ENCODE measurements at regions of chr7 and their contacts with region 1.

Region 1: DNA sequence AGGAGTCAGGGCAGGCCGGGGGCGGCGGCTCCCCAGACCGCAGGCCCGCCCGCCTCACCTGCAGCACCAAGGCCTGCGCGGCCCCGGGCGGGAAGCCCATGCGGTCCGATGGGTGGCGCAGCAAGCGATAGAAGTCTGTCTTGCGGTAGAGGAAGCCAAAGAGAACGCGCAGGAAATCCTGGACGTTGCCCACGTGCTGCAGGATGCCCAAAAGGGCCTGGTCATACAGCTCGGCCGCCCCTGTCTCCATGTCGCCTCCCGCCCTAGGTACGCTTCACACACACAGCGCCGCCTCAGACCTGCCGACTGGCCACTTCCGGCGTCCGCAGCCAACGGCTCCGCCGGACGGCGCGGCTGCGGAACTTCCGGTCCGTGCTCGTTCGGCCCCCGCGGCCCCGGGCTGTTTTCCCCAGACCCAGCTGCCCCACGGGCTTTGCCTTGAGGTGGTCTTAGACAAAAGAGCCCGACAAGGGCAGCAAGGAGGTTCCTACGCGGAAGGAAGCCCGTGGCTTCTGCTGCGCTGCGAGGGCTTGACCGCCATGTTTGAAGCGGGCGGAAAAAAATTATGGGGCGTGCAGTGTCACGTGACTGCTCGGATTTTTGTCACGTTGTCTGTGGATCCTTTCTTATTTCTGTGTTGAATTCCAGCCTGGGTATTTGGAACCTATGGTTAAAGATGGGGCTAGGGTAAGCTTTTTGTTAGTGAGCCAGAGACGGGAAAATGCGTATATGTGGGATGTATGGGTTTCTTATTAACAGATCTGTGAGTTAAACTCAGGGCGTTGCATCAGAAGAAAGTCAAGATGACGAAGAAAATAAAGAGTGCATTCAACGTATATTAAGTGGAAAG is at the start of gene NUDCD3:
- DNase-seq: peak; percentile 97
- H3K4me3 ChIP-seq: peak within 1 kb of the TSS; percentile 96 to 98
- H3K27ac ChIP-seq: peak within 1 kb of the TSS; percentile 98 to 99
- H3K4me1 ChIP-seq: peaks cover 10 to 22% of the 10 kb centered on the region in 2 experiments; a peak in 3 of 4 replicates
- H3K27me3 ChIP-seq: no peaks in the 10 kb centered on the region
- CTCF ChIP-seq: peak; percentile 47
- EP300 ChIP-seq: peak in 1 of 2 experiments; percentile 3; a peak in 1 of 4 replicates
- RAD21 ChIP-seq: no peak
- polyA plus RNA-seq, gene NUDCD3: 66.0 and 83.1 TPM in 2 replicates

Region 2: DNA sequence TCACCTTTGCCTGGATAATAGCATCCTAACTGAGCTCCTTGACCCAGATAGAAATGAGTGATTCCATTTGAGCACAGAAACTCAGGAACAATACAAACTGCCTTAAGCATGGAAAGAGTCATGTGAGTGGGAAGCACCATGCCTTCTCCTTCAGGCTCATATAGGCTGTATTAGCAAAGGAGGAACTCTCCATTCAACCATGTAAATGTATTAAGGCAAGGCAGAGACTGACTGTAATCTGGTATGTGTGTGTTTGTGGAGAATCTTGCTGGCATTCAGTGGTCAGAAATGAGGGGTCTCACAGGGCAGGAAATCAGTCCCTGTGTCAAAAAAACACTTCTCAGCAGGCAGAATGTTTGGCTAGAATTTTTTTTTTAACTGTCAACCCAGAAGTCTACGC is 801.5 kb before region 1 on chr7:
- CTCF ChIA-PET with region 1: no interaction called
- POLR2A ChIA-PET with region 1: no interaction called
- DNase-seq: no peak
- H3K4me3 ChIP-seq: no peak overlapping the region
- H3K27ac ChIP-seq: peak overlapping the region; percentile 4 to 8; a peak in 2 of 4 replicates
- H3K4me1 ChIP-seq: peaks cover 0 to 12% of the 10 kb centered on the region in 2 experiments; a peak in 3 of 4 replicates
- H3K27me3 ChIP-seq: no peaks in the 10 kb centered on the region
- CTCF ChIP-seq: no peak
- EP300 ChIP-seq: no peak
- RAD21 ChIP-seq: no peak

Region 3: DNA sequence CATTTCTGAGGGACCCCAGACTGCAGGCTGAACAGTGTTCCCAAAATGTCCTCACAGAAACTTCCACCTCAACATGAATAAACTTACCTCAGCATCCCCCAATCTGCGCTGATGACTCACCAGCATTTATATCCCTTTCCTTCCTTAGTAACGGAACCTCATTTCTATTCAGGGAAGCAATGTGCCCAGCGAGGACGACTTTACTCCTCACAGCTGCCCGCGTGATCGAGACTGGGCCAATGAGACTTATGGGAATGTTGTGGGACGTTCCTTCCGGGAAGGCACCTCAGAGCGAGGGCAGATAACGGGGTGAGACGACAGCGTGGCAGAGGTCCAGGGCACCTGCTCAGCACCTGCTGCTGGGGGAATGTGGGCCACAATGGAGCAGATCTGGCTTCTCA is 92.1 kb before region 1 on chr7:
- CTCF ChIA-PET with region 1: no interaction called
- POLR2A ChIA-PET with region 1: no interaction called
- DNase-seq: no peak
- H3K4me3 ChIP-seq: no peak overlapping the region
- H3K27ac ChIP-seq: no peak overlapping the region
- H3K4me1 ChIP-seq: peaks cover 0 to 27% of the 10 kb centered on the region in 2 experiments; a peak in 1 of 4 replicates
- H3K27me3 ChIP-seq: no peaks in the 10 kb centered on the region
- CTCF ChIP-seq: no peak
- EP300 ChIP-seq: no peak
- RAD21 ChIP-seq: no peak

Region 4: GRCh38 chr7:44415047-44415446 is 75.5 kb before region 1 on chr7:
- CTCF ChIA-PET with region 1: no interaction called
- POLR2A ChIA-PET with region 1: no interaction called
- DNase-seq: no peak
- H3K4me3 ChIP-seq: no peak overlapping the region
- H3K27ac ChIP-seq: no peak overlapping the region
- H3K4me1 ChIP-seq: peaks cover 0 to 6% of the 10 kb centered on the region in 2 experiments; a peak in 2 of 4 replicates
- H3K27me3 ChIP-seq: no peaks in the 10 kb centered on the region
- CTCF ChIP-seq: no peak
- EP300 ChIP-seq: no peak
- RAD21 ChIP-seq: no peak

Region 5: DNA sequence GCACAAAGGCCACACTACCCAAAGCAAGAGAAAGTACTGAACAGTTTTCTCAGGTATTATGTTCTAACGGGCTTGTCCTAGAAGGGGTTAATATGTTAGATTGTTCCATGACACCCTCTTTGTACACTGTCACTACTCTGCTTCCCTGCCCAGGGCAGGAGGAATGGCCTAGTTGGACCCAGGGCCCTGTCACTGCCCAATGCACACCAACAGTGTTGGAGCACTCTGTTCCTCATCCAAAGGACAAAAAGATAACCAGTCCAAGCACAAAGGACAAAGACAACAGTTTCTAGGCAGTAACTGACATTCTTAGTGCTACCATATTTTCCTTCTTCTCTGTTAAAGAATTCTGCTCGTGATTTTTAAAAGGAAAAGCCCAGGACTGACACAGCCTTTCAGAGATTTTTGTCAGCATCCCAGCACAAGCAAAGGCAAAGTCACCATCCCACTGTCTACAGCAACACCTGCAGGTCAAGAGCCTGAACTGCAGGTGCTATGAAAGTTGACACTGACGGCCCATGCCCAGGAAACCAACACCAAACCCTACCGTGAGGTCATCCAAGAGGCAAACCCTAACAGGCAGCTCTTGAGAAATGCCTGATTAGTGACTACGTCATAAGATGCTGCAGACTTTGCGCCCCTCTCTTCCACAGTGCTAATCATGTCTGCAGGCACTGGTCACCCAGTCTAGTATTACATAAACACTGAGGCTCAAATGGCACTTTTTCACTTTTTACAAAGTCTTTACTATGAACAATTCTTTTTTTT is 13.3 kb before region 1 on chr7:
- CTCF ChIA-PET with region 1: interaction called, 15 read pairs
- POLR2A ChIA-PET with region 1: interaction called, 4 read pairs
- DNase-seq: peak; percentile 72
- H3K4me3 ChIP-seq: no peak overlapping the region; a peak in 1 of 4 replicates
- H3K27ac ChIP-seq: no peak overlapping the region
- H3K4me1 ChIP-seq: peaks cover 9 to 13% of the 10 kb centered on the region in 2 experiments; a peak in 3 of 4 replicates
- H3K27me3 ChIP-seq: no peaks in the 10 kb centered on the region
- CTCF ChIP-seq: peak; percentile 100
- EP300 ChIP-seq: no peak
- RAD21 ChIP-seq: peak; percentile 98

Region 6: DNA sequence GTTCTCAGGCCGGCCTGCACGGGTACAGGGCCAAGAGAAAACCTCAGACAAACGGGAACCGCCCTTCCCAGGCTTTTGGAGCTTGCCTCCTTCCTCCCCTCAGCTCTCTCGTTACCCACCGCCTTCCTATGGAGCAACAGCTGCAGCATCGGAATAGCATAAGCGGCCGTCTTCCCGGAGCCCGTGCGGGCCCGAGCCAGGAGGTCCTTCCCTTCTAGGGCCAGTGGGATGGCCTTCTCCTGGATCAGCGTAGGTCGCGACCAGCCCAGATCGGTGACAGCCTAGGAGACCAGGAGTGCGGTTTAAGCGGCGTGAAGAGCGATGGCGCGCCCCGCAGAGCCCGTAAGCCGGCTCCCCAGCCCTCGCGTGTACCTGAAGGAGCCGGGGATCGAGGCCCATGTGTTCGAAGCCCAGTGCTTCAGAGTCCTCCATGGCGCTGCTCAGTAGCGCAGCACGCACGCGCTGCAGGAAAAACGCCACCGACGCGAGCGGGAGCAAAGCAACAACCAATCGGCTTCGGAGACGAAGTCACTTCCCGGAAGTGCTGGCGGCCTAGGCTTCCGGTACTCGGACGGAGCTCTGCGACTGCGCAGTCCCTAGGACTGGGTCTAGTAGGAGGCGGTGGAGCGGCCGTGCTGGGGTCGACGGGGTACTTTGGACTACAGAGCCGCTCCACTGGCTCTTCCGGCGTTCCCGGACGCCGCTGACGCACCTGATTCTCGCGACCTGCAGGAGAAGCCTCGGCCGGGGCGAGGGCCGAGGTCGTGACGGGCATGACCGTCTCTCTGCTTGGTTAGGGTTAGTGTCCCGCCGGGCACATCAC is 83.1 kb after region 1 on chr7 and contains the start of gene DDX56:
- CTCF ChIA-PET with region 1: interaction called, 5 read pairs
- POLR2A ChIA-PET with region 1: interaction called, 10 read pairs
- DNase-seq: peak; percentile 99
- H3K4me3 ChIP-seq: peak within 1 kb of the TSS; percentile 87 to 94
- H3K27ac ChIP-seq: peak within 1 kb of the TSS; percentile 57 to 83
- H3K4me1 ChIP-seq: peaks cover 7 to 17% of the 10 kb centered on the region in 2 experiments
- H3K27me3 ChIP-seq: no peaks in the 10 kb centered on the region
- CTCF ChIP-seq: no peak
- EP300 ChIP-seq: no peak
- RAD21 ChIP-seq: no peak
- polyA plus RNA-seq, gene DDX56: 97.1 and 126 TPM in 2 replicates

Region 7: DNA sequence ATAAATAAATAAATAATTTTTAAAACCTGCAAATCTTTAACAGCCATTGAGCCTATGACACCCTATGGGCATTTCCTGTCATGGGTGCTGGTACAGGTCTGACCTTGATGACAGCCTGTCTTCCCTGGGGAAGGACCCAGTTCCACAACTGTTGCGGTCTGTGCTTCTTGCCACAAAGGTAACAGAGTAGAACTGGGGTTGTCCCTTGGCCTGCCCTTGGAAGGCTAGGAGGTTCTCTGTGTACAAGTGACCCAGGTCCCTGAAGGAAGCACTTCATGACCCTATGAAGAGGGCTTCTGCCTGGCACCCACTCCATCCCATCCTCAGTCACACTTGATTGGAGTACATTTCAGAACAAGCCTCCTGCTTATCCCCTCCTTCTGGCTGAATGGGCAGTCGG is 182.7 kb after region 1 on chr7:
- CTCF ChIA-PET with region 1: no interaction called
- POLR2A ChIA-PET with region 1: no interaction called
- DNase-seq: no peak
- H3K4me3 ChIP-seq: no peak overlapping the region
- H3K27ac ChIP-seq: no peak overlapping the region
- H3K4me1 ChIP-seq: peaks cover 0 to 3% of the 10 kb centered on the region in 2 experiments; a peak in 1 of 4 replicates
- H3K27me3 ChIP-seq: no peaks in the 10 kb centered on the region
- CTCF ChIP-seq: no peak
- EP300 ChIP-seq: no peak
- RAD21 ChIP-seq: no peak

Measured in SK-N-SH (cell line).